Dorsolateral prefrontal cortex (tissue), 120 donors: ENCODE measurements at regions of chr10 and their contacts with region 1.

Region 1: GRCh38 chr10:94320285-94320914 is 42.3 kb downstream of the NOC3L start:
- DNase-seq: peak; percentile 40 to 81 (median 59)
- H3K4me3 ChIP-seq: no peak overlapping the region
- H3K27ac ChIP-seq: no peak overlapping the region
- H3K27me3 ChIP-seq: no peaks in the 10 kb centered on the region
- CTCF ChIP-seq: peak; percentile 81 to 99 (median 92)

Region 2: GRCh38 chr10:93916257-93917063 is 403.9 kb before region 1 on chr10:
- intact Hi-C with region 1: loop called (anchors 5 kb)
- DNase-seq: no peak
- H3K4me3 ChIP-seq: peak overlapping the region in 12 of 59 donors; percentile 7 to 41 (median 30)
- H3K27ac ChIP-seq: no peak overlapping the region
- H3K27me3 ChIP-seq: no peaks in the 10 kb centered on the region
- CTCF ChIP-seq: peak; percentile 27 to 78 (median 58)

Region 3: GRCh38 chr10:94076321-94076841 is 244.0 kb before region 1 on chr10:
- intact Hi-C with region 1: loop called in 1 of 2 experiments (anchors 10 kb)
- DNase-seq: no peak
- H3K4me3 ChIP-seq: peak overlapping the region in 5 of 59 donors; percentile 9 to 22 (median 16)
- H3K27ac ChIP-seq: no peak overlapping the region
- H3K27me3 ChIP-seq: peaks cover 0 to 27% (median 0%) of the 10 kb centered on the region in 45 donors
- CTCF ChIP-seq: peak in 55 of 56 donors; percentile 16 to 72 (median 52)